Head of caudate nucleus (tissue), 42 donors: ENCODE measurements at regions of chr11 and their contacts with region 1.

Region 1: DNA sequence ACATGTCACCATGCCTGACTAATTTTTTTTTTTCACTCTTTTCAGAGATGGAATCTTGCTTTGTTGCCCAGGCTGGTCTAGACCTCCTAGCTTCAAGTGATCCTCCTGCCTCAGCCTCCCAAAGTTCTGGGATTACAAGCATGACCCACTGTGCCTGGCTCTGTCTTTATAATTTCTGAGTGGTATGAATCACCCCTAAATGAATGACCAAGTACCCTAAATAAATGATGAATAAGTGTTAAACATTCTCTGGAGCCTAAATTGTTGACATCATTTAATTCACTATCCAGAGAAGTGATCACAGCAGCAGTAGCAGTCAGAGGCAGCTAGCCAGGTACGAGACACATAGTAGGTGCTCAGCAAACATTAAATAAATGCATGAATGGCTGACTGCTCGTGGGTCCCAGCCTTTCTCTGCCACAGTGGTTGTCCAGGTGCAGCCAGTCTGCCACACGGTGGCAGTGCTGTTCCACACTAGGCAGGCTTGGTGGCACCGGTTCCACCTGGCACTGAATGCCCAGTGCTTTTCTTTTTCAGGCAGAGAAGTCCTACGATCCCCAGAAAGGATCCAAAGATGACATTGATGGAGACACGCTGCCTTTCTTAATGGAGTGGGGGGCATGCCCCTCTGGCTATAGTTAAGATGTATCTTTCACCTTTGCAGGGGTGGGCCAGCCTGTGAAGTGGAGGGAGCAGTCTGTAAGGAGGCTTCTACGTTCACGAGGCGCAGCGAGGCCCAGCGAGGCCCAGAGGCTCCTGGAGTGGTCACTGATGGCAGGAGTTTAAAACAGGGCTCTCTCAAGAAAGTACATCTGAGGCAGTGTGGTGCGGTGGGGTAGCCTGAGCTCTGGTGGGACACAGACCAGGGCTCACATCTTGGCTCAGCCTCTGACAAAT is 8.7 kb upstream of the TTC12 start:
- DNase-seq: peak; percentile 73 to 94 (median 88)

Region 2: GRCh38 chr11:113532697-113533424 is 227.2 kb after region 1 on chr11:
- intact Hi-C with region 1: loop called (anchors 5 kb)
- DNase-seq: peak; percentile 69 to 96 (median 87)

Region 3: GRCh38 chr11:113730887-113731726 is 425.4 kb after region 1 on chr11:
- intact Hi-C with region 1: loop called (anchors 2 kb)
- DNase-seq: peak in 41 of 42 donors; percentile 18 to 86 (median 67)